CD8-positive, alpha-beta memory T cell (primary cell): ENCODE measurements at regions of chr2 and their contacts with region 1.

Region 1: GRCh38 chr2:86440631-86441391 is at the start of gene KDM3A:
- DNase-seq: peak; percentile 99 to 100 (median 99)
- H3K4me3 ChIP-seq: peak within 1 kb of the TSS; percentile 87
- H3K4me3 Mint-ChIP-seq: peak within 1 kb of the TSS; percentile 93 to 98 (median 96)
- H3K27ac ChIP-seq: peak within 1 kb of the TSS; percentile 96
- H3K27ac Mint-ChIP-seq: peak within 1 kb of the TSS; percentile 95 to 100 (median 98)
- H3K4me1 ChIP-seq: peaks cover 34% of the 10 kb centered on the region
- H3K4me1 Mint-ChIP-seq: peaks cover 43 to 47% (median 46%) of the 10 kb centered on the region in 3 donors
- H3K27me3 ChIP-seq: no peaks in the 10 kb centered on the region
- H3K27me3 Mint-ChIP-seq: peaks cover 0 to 16% of the 10 kb centered on the region in 2 donors
- total RNA-seq, gene KDM3A: 45.8 to 46.2 TPM

Region 2: GRCh38 chr2:86195055-86195807 is 245.6 kb before region 1 on chr2 and contains the start of gene IMMT:
- CTCF ChIA-PET with region 1: no interaction called
- POLR2A ChIA-PET with region 1: interaction called, 20 read pairs
- DNase-seq: peak; percentile 87 to 94 (median 92)
- H3K4me3 ChIP-seq: peak within 1 kb of the TSS; percentile 69
- H3K4me3 Mint-ChIP-seq: peak within 1 kb of the TSS; percentile 89 to 98 (median 93)
- H3K27ac ChIP-seq: peak within 1 kb of the TSS; percentile 94
- H3K27ac Mint-ChIP-seq: peak within 1 kb of the TSS; percentile 88 to 99 (median 94)
- H3K4me1 ChIP-seq: peaks cover 38% of the 10 kb centered on the region
- H3K4me1 Mint-ChIP-seq: peaks cover 51 to 76% (median 75%) of the 10 kb centered on the region in 3 donors
- H3K27me3 ChIP-seq: no peaks in the 10 kb centered on the region
- H3K27me3 Mint-ChIP-seq: no peaks in the 10 kb centered on the region
- total RNA-seq, gene IMMT: 147 to 149 TPM

Region 3: DNA sequence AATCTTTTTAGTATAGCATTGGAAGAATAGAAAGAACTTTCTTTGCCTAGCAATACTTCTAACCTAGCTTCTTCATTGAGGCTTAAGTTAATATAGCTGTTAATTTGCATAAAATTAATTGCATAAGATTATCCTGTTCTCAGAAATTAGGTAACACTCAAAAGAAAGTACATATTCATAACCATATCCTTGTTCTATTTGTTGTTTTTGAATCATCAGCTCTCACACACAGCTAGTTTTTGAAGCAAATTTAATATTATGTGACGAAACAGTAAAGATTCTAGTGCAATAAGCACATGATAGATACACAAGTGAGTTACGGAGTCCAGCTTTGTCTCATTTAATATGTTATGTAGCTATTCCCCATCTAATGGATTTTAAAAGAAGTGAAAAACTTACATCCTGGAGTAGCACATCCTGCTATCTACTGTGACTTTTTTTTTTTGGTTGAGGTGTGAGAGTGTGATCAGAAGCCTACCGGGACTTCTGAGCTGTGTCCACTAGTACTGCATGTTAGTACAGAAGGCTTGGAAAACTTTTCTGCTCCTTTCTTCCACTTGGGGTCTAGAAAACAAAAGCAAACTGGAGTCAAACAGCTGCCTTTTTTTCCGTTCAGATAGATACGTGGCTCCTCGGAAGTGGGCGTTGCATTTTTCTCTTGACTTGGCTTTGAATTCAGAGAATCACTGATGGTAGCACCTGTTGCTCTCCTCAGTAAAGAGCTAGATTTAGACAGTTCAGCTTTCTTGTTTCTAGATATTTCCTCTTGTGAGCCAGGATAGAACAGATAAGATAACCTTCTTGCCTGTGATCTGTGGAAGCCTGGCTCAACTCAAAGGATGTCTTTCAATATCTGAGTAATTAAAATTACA is 27.6 kb after region 1 on chr2:
- CTCF ChIA-PET with region 1: interaction called, 3 read pairs
- POLR2A ChIA-PET with region 1: interaction called, 18 read pairs
- DNase-seq: no peak
- H3K4me3 ChIP-seq: no peak overlapping the region
- H3K4me3 Mint-ChIP-seq: peak overlapping the region in 5 of 7 donors; percentile 13 to 32 (median 26)
- H3K27ac ChIP-seq: no peak overlapping the region
- H3K27ac Mint-ChIP-seq: peak overlapping the region in 6 of 8 donors; percentile 36 to 88 (median 61)
- H3K4me1 ChIP-seq: peaks cover 23% of the 10 kb centered on the region
- H3K4me1 Mint-ChIP-seq: peaks cover 48 to 66% (median 58%) of the 10 kb centered on the region in 3 donors
- H3K27me3 ChIP-seq: no peaks in the 10 kb centered on the region
- H3K27me3 Mint-ChIP-seq: no peaks in the 10 kb centered on the region

Region 4: DNA sequence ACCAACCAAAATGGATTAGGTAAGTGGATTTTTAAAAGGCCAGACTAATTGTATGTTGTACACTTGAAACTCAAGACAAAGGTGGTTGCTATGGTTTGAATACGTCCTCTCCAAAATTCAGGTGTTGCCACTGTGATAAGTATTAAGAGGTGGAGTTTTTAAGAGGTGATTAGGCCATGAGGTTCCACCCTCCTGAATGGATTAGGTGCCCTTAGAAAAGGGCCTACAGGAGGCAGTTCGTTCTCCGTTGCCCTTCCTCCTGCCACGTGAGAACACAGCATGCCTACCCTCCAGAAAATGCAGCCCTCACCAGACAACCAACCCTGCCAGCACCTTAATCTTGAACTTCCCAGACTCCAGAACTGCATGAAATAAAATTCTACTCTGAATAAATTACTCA is 71.2 kb after region 1 on chr2:
- CTCF ChIA-PET with region 1: no interaction called
- POLR2A ChIA-PET with region 1: no interaction called
- DNase-seq: no peak
- H3K4me3 ChIP-seq: no peak overlapping the region
- H3K4me3 Mint-ChIP-seq: no peak overlapping the region
- H3K27ac ChIP-seq: no peak overlapping the region
- H3K27ac Mint-ChIP-seq: no peak overlapping the region
- H3K4me1 ChIP-seq: no peaks in the 10 kb centered on the region
- H3K4me1 Mint-ChIP-seq: peaks cover 10 to 14% (median 12%) of the 10 kb centered on the region in 3 donors
- H3K27me3 ChIP-seq: no peaks in the 10 kb centered on the region
- H3K27me3 Mint-ChIP-seq: no peaks in the 10 kb centered on the region

Region 5: DNA sequence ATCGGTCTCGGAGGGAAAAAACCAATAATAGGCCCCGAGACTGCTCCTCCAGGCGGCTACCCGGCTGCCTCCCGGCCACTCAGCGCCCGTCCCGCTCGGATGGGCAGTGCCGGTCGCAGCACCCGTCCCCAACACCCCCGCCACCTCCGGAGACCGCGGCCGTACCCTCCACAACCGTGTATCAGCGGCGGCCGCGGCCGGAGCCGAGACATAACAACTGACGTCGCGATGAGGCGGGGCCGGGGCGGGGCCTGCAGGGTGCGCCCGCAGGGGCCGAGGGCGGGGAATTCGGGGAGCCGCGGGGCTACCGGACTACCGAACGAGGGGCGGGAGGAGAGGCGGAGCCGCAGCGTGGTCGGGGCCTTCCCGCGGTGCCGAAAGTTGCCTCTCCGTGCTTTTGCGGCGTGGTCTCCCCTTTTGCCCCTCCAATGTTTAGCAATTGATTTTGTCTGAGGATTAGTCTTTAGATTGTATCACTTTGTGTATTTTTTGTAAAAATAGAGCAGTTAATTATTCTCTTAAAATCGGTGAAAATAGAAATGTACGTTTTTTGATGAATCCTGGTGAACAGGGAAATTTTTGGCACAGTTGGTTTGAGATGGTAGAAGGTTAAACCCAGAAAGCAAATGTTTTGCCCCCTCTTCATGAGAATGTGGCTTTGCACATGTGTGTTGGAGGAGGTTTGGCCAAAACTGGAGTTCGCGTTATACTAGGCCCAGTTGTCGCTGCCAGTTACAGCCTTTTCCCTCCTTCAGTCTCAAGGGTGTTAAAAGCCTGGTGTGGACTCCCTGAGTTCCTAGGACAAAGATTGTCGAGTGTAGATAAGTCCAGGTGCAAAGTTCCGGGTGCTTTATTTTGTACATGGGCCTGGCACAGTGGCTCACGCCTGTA is 183.1 kb after region 1 on chr2 and contains the start of gene RNF103:
- CTCF ChIA-PET with region 1: no interaction called
- POLR2A ChIA-PET with region 1: interaction called, 12 read pairs
- DNase-seq: peak; percentile 88 to 93 (median 90)
- H3K4me3 ChIP-seq: peak within 1 kb of the TSS; percentile 82
- H3K4me3 Mint-ChIP-seq: peak within 1 kb of the TSS; percentile 90 to 97 (median 94)
- H3K27ac ChIP-seq: peak within 1 kb of the TSS; percentile 76
- H3K27ac Mint-ChIP-seq: peak within 1 kb of the TSS; percentile 90 to 99 (median 94)
- H3K4me1 ChIP-seq: peaks cover 12% of the 10 kb centered on the region
- H3K4me1 Mint-ChIP-seq: peaks cover 37 to 43% (median 42%) of the 10 kb centered on the region in 3 donors
- H3K27me3 ChIP-seq: no peaks in the 10 kb centered on the region
- H3K27me3 Mint-ChIP-seq: peaks cover 2 to 8% of the 10 kb centered on the region in 2 donors
- total RNA-seq, gene RNF103: 14.6 TPM